K562 (cell line): ENCODE measurements at regions of chr6 and their contacts with region 1.

Region 1: GRCh38 chr6:47413752-47414422 is 63.7 kb upstream of the CD2AP start:
- DNase-seq: peak; percentile 70 to 85 (median 74)
- ATAC-seq: peak; percentile 85
- H3K4me3 ChIP-seq: no peak overlapping the region; the same call in 1 of the 2 replicates
- H3K27ac ChIP-seq: 0 out of 3 replicates have a peak overlapping the region, but pooled peaks have one; percentile 78
- H3K4me1 ChIP-seq: peaks cover 0 to 19% of the 10 kb centered on the region in 2 experiments; a peak in 3 of 5 replicates
- H3K27me3 ChIP-seq: no peaks in the 10 kb centered on the region
- CTCF ChIP-seq: peak; percentile 77 to 97 (median 92)
- EP300 ChIP-seq: no peak
- POLR2A ChIP-seq: no peak
- RAD21 ChIP-seq: peak; percentile 95 to 98

Region 2: DNA sequence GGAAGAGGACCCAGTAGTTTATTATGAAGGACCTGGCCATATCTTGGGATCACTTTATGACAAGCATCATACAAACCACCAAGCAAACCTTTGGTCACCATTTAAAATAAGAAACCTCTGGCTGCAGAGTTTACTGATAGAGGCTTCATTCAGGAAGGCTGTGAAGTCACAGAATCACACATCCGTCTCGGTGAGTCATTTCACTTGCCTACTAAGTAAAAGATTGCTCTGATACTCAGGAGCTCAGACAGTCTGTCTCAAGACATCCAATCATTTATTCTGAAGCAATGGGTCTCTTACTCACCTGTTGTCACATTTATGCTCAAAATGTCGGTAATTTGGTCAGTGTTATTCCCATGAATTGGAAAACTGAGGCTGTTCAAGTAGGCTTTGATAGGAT is 525.9 kb before region 1 on chr6:
- CTCF ChIA-PET with region 1: no interaction called
- POLR2A ChIA-PET with region 1: no interaction called
- in situ Hi-C with region 1: no loop called
- intact Hi-C with region 1: no loop called
- DNase-seq: no peak
- ATAC-seq: no peak
- H3K4me3 ChIP-seq: no peak overlapping the region
- H3K27ac ChIP-seq: no peak overlapping the region
- H3K4me1 ChIP-seq: no peaks in the 10 kb centered on the region
- H3K27me3 ChIP-seq: no peaks in the 10 kb centered on the region
- CTCF ChIP-seq: no peak
- EP300 ChIP-seq: no peak
- POLR2A ChIP-seq: no peak
- RAD21 ChIP-seq: no peak

Region 3: DNA sequence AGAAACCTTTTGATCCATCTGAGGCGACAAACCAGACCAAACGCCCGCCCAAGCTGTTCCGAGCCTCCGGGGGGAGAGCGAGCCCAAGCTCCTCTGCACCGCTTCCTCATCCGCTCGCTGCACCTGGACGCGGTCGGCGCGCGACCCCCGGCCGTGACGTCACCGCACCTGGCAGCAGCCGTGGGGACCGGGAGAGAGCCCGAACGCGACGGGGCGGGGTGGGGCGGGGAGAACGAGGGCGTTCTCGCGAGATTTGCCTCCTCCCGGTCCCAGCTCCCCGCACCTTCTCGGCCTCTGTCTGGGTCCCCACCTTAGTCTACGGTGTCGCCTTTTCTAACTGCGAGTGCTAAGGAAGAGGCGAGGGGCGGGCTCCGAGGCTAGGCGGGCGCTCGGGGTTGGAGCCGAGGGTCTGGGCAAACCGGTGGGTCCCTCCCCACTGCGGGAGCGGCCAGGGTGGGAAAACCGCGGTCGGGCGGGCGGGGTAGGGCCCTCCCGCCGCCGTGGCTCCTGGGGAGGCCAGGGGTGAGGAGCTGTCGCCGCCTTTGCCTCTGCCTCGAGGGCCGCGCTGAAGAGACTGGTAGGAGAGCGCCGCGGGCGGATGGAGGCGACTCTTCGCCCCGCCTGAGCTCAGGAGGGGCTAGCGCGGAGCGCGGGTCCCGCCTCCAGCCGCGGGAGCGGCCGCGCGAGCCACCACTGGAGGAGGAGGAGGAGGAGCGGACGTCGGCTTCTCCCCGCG is 63.8 kb after region 1 on chr6 and contains the start of gene CD2AP:
- CTCF ChIA-PET with region 1: no interaction called
- POLR2A ChIA-PET with region 1: interaction called, 4 read pairs
- in situ Hi-C with region 1: no loop called
- intact Hi-C with region 1: loop called (anchors 1 kb)
- DNase-seq: peak; percentile 92 to 97 (median 94)
- ATAC-seq: peak; percentile 81
- H3K4me3 ChIP-seq: peak within 1 kb of the TSS; percentile 85
- H3K27ac ChIP-seq: peak within 1 kb of the TSS; percentile 93
- H3K4me1 ChIP-seq: peaks cover 8 to 17% of the 10 kb centered on the region in 2 experiments; a peak in 4 of 5 replicates
- H3K27me3 ChIP-seq: no peaks in the 10 kb centered on the region
- CTCF ChIP-seq: peak; percentile 28 to 48 (median 42); a peak in 3 of 6 replicates
- EP300 ChIP-seq: no peak
- POLR2A ChIP-seq: peak; percentile 89
- RAD21 ChIP-seq: peak in 1 of 2 experiments; percentile 4; a peak in 3 of 4 replicates
- polyA plus RNA-seq, gene CD2AP: 9.4 to 15.9 TPM

Region 4: DNA sequence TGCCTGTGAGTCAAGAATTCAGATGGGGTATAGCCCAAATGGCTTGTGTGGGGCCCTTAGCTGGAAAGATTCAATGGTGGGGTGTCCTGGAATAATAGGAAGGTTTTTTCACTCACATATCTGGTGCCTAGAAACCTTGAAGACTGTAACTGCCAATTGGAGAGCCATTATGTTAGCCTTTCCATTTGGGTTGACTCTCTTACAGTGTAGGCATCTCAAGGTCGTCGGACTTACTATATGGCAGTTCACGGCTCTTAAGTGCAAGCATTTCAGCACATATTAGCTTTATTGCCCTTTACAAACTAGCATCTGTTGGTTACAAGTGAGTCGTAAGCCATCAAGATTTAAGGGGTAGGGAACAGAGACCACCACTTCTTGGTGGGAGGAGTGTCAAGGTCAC is 137.8 kb after region 1 on chr6:
- CTCF ChIA-PET with region 1: no interaction called
- POLR2A ChIA-PET with region 1: interaction called, 3 read pairs
- in situ Hi-C with region 1: no loop called
- intact Hi-C with region 1: loop called (anchors 5 kb)
- DNase-seq: no peak
- ATAC-seq: peak; percentile 54
- H3K4me3 ChIP-seq: no peak overlapping the region
- H3K27ac ChIP-seq: no peak overlapping the region
- H3K4me1 ChIP-seq: no peaks in the 10 kb centered on the region
- H3K27me3 ChIP-seq: no peaks in the 10 kb centered on the region
- CTCF ChIP-seq: no peak
- EP300 ChIP-seq: no peak
- POLR2A ChIP-seq: no peak
- RAD21 ChIP-seq: no peak

Region 5: DNA sequence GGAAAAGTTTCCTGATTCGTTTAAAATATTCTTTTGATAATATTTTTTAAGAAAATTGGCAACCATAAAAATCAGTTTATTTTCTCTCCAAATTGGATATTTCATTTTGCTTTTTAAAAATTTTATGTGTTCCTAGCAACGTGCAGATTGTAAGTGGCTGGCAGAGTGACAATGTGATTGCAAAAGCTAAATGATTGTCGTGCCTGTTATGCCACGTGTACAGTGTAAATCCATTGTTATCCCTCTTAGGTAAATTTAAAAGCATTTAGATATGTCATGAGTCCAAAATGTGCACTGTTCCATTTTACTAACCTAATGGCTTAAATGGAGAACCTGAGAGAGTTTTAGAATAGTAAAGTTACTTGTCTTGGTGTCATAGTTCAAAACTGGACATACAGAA is 190.1 kb after region 1 on chr6:
- CTCF ChIA-PET with region 1: no interaction called
- POLR2A ChIA-PET with region 1: interaction called, 4 read pairs
- in situ Hi-C with region 1: loop called (anchors 25 kb)
- intact Hi-C with region 1: no loop called
- DNase-seq: no peak
- ATAC-seq: no peak
- H3K4me3 ChIP-seq: no peak overlapping the region
- H3K27ac ChIP-seq: no peak overlapping the region
- H3K4me1 ChIP-seq: no peaks in the 10 kb centered on the region
- H3K27me3 ChIP-seq: no peaks in the 10 kb centered on the region
- CTCF ChIP-seq: no peak
- EP300 ChIP-seq: no peak
- POLR2A ChIP-seq: no peak
- RAD21 ChIP-seq: no peak

Region 6: DNA sequence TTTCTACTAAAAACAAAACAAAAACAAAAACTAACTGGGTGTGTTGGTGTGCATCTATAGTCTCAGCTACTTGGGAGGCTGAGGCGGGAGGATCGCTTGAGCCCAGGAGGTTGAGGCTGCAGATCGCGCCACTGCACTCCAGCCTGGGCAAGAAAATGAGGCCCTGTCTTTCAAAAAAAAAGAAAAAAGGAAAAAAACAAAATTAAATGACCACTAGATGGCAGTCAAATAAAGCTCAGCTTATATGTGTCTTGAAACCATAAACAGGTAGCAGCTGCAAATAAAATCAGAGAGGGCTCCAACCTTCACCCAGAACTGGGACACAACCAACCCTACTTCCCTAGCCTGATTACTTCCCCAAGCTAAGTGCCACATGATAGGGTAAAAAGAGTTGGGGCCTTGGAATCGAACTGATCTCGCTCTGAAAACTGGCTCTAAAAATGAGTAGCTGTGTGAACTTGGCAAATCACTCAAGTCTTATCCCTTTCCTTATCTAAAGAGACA is 217.4 kb after region 1 on chr6:
- CTCF ChIA-PET with region 1: interaction called, 4 read pairs
- POLR2A ChIA-PET with region 1: interaction called, 3 read pairs
- in situ Hi-C with region 1: no loop called
- intact Hi-C with region 1: loop called (anchors 1 kb)
- DNase-seq: peak; percentile 42 to 65 (median 48)
- ATAC-seq: peak; percentile 84
- H3K4me3 ChIP-seq: no peak overlapping the region
- H3K27ac ChIP-seq: no peak overlapping the region
- H3K4me1 ChIP-seq: peaks cover 0 to 4% of the 10 kb centered on the region in 2 experiments; a peak in 2 of 5 replicates
- H3K27me3 ChIP-seq: no peaks in the 10 kb centered on the region
- CTCF ChIP-seq: peak; percentile 57 to 88 (median 61); a peak in 5 of 6 replicates
- EP300 ChIP-seq: no peak
- POLR2A ChIP-seq: no peak
- RAD21 ChIP-seq: peak; percentile 79 to 80

Region 7: GRCh38 chr6:47733879-47734558 is 320.1 kb after region 1 on chr6:
- CTCF ChIA-PET with region 1: interaction called, 11 read pairs
- POLR2A ChIA-PET with region 1: no interaction called
- in situ Hi-C with region 1: no loop called
- intact Hi-C with region 1: loop called (anchors 1 kb)
- DNase-seq: peak in 2 of 4 experiments; percentile 20 to 50
- ATAC-seq: peak; percentile 83
- H3K4me3 ChIP-seq: no peak overlapping the region
- H3K27ac ChIP-seq: no peak overlapping the region
- H3K4me1 ChIP-seq: no peaks in the 10 kb centered on the region
- H3K27me3 ChIP-seq: no peaks in the 10 kb centered on the region
- CTCF ChIP-seq: peak; percentile 20 to 65 (median 50); a peak in 5 of 6 replicates
- EP300 ChIP-seq: no peak
- POLR2A ChIP-seq: no peak
- RAD21 ChIP-seq: peak; percentile 79 to 88

Region 8: GRCh38 chr6:47780510-47781356 is 366.8 kb after region 1 on chr6:
- CTCF ChIA-PET with region 1: interaction called, 6 read pairs
- POLR2A ChIA-PET with region 1: no interaction called
- in situ Hi-C with region 1: no loop called
- intact Hi-C with region 1: loop called (anchors 2 kb)
- DNase-seq: peak in 3 of 4 experiments; percentile 16 to 56 (median 42)
- ATAC-seq: peak; percentile 91
- H3K4me3 ChIP-seq: no peak overlapping the region
- H3K27ac ChIP-seq: no peak overlapping the region
- H3K4me1 ChIP-seq: no peaks in the 10 kb centered on the region
- H3K27me3 ChIP-seq: no peaks in the 10 kb centered on the region
- CTCF ChIP-seq: peak; percentile 65 to 79 (median 73)
- EP300 ChIP-seq: no peak
- POLR2A ChIP-seq: no peak
- RAD21 ChIP-seq: peak; percentile 79 to 87